Breast epithelium (tissue), 4 donors: ENCODE measurements at regions of chr13 and their contacts with region 1.

Region 1: DNA sequence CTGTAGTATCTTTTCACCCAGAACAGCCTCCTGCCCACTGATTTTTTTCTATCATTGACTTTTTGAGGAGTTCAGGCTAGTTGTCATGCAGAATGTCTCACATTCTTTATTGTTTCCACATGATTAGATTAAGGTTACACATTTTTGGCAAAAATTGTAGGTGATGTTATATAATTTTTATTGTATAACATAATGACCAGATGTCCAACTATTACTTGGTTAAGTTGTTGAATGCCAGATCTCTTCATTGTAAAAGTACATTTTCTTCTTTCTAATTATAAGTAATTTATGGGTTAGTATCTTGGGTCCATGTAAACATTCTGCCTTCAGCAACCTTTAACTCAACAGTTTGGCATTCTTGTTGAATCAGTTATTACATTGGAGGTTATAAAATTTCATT is 138.4 kb downstream of the POSTN start:
- DNase-seq: no peak
- H3K4me3 ChIP-seq: no peak overlapping the region
- H3K27ac ChIP-seq: no peak overlapping the region
- H3K4me1 ChIP-seq: no peaks in the 10 kb centered on the region
- H3K27me3 ChIP-seq: no peaks in the 10 kb centered on the region
- CTCF ChIP-seq: no peak
- POLR2A ChIP-seq: no peak

Region 2: GRCh38 chr13:39051157-39051556 is 1591.0 kb after region 1 on chr13:
- intact Hi-C with region 1: loop called (anchors 10 kb)
- DNase-seq: no peak
- H3K4me3 ChIP-seq: no peak overlapping the region
- H3K27ac ChIP-seq: no peak overlapping the region
- H3K4me1 ChIP-seq: no peaks in the 10 kb centered on the region
- H3K27me3 ChIP-seq: no peaks in the 10 kb centered on the region
- CTCF ChIP-seq: peak in 1 of 3 donors; percentile 21
- POLR2A ChIP-seq: no peak